Endothelial cell of umbilical vein (primary cell): ENCODE measurements at regions of chr1 and their contacts with region 1.

Region 1: DNA sequence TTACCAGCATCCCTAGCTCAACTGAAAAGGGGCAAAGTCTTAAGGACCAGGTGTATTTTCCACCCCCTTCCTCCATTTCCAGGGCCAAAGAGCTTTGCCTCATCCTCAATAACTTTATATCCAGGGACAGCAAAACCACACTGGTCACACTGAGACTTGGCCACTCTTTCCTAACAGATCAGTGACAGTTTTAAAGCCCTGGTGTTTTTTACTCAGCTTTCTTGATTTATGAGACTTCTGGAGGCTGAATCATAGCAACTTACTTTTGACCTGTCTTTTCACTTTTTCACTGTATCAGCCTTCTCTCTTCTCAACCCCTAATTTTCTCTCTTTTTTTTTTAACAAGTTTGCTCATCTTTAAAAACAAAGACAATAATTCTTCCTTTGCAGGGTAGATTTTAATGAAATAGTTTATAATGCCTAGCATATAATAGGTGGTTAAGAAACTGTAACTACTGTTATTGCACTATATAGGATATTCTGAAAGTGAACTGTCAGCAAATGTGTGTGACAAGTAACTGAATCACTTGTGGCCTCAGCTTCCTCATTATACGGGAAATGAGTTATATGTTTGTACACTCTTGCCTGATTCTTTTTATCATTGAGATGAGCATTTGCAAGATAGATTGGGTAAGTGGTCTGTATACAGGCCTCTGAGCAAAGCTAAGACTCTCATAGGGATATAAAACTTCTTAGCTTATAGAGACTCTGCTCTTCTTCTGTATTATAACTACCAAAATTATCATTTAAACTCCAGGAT is 19.7 kb upstream of the DYNLT5 start:
- DNase-seq: peak; percentile 64
- H3K4me3 ChIP-seq: no peak overlapping the region
- H3K27ac ChIP-seq: peak overlapping the region; percentile 64
- H3K4me1 ChIP-seq: peaks cover 37% of the 10 kb centered on the region
- H3K27me3 ChIP-seq: no peaks in the 10 kb centered on the region
- CTCF ChIP-seq: no peak
- POLR2A ChIP-seq: no peak

Region 2: DNA sequence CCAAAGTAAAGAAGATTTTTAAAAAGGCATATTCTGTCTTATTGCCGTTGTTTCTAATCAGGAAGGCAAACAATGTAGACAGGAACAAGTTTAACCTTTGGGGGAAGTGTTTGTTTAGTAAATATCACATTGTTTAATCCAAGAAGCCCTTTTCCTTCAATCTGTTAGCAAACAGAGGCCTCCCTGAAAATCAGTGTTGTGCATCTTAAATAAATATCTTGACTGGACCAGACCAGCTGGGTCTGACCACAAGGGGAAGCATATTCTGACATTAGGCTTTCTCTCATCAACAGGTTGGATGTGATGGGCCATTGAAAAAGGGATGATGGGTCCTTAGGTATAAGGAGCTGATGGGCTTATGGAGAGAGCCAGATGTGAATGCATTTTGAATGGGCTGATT is 280.4 kb before region 1 on chr1:
- CTCF ChIA-PET with region 1: interaction called, 39 read pairs
- POLR2A ChIA-PET with region 1: no interaction called
- dilution Hi-C with region 1: no loop called
- intact Hi-C with region 1: no loop called
- DNase-seq: peak; percentile 33
- H3K4me3 ChIP-seq: no peak overlapping the region
- H3K27ac ChIP-seq: no peak overlapping the region
- H3K4me1 ChIP-seq: no peaks in the 10 kb centered on the region
- H3K27me3 ChIP-seq: no peaks in the 10 kb centered on the region
- CTCF ChIP-seq: peak; percentile 22 to 25
- POLR2A ChIP-seq: no peak

Region 3: GRCh38 chr1:66533804-66534740 is 198.5 kb before region 1 on chr1 and contains the start of gene SGIP1:
- CTCF ChIA-PET with region 1: interaction called, 13 read pairs
- POLR2A ChIA-PET with region 1: no interaction called
- dilution Hi-C with region 1: no loop called
- intact Hi-C with region 1: loop called (anchors 2 kb)
- DNase-seq: peak; percentile 88
- H3K4me3 ChIP-seq: peak within 1 kb of the TSS; percentile 41 to 66 (median 47)
- H3K27ac ChIP-seq: peak within 1 kb of the TSS; percentile 75
- H3K4me1 ChIP-seq: peaks cover 29% of the 10 kb centered on the region
- H3K27me3 ChIP-seq: no peaks in the 10 kb centered on the region
- CTCF ChIP-seq: no peak
- POLR2A ChIP-seq: no peak
- total RNA-seq, gene SGIP1: 51.0 and 68.9 TPM in 2 replicates

Region 4: DNA sequence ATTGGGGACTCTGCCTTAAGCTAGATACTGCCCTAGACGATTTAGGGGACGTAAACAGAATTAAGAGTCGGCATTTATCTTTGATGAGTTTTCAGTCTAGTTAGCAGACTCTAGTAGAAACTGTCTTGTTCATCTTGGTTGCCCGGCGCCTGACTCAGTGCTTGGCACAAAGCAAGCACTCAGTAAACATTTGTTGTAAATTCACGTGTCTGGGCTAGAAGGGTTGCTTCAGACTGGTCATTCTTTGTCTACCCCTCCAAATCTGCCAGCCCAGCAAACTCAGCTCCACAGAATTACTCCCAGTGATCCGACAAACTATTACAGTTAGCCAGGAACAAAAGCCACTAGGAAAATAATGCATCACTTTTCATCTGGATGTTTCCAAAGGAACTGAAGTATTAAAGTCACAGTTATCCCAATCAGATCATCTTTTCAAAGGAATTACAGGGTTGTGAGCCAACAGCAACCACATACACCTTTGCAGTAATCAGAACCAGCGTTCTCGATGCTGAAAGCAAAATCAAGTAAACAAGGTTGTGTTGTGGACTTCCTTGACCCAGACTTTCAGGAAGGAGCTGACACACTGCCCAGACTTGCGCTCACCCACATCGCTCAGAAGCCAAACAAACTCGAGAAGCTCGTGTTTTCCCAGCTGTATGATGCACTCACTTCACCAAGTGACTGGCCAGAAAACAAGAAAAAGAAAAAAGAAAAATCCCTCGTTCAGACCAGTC is 885.9 kb after region 1 on chr1:
- CTCF ChIA-PET with region 1: no interaction called
- POLR2A ChIA-PET with region 1: no interaction called
- dilution Hi-C with region 1: no loop called
- intact Hi-C with region 1: no loop called
- DNase-seq: peak; percentile 99
- H3K4me3 ChIP-seq: no peak overlapping the region
- H3K27ac ChIP-seq: peak overlapping the region; percentile 92
- H3K4me1 ChIP-seq: peaks cover 24% of the 10 kb centered on the region
- H3K27me3 ChIP-seq: no peaks in the 10 kb centered on the region
- CTCF ChIP-seq: no peak
- POLR2A ChIP-seq: peak; percentile 41